AG04450 (cell line): ENCODE measurements at regions of chrX and their contacts with region 1.

Region 1: DNA sequence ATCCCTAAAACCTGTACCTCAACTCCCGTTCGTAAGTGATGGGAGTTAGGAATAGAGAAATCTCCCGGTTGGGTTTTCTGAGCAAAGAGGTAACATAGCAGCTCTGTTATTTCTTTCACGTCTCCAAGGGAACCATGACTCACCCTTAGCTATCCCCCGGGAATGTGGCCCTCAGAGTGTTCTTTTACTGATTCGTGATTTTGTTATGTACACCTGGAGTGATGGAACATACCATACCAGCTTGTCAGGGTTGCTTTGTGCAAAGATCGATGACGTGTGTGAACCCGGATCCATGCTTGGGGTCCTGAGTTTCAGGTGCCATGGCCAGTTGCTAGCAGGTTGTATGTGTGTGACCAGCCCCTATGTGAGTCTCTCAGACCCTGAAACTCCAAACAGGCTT is 52.6 kb downstream of the HPRT1 start:
- DNase-seq: peak; percentile 61
- H3K4me3 ChIP-seq: no peak overlapping the region
- H3K27ac ChIP-seq: peak overlapping the region; percentile 98
- H3K27me3 ChIP-seq: no peaks in the 10 kb centered on the region
- CTCF ChIP-seq: no peak

Region 2: DNA sequence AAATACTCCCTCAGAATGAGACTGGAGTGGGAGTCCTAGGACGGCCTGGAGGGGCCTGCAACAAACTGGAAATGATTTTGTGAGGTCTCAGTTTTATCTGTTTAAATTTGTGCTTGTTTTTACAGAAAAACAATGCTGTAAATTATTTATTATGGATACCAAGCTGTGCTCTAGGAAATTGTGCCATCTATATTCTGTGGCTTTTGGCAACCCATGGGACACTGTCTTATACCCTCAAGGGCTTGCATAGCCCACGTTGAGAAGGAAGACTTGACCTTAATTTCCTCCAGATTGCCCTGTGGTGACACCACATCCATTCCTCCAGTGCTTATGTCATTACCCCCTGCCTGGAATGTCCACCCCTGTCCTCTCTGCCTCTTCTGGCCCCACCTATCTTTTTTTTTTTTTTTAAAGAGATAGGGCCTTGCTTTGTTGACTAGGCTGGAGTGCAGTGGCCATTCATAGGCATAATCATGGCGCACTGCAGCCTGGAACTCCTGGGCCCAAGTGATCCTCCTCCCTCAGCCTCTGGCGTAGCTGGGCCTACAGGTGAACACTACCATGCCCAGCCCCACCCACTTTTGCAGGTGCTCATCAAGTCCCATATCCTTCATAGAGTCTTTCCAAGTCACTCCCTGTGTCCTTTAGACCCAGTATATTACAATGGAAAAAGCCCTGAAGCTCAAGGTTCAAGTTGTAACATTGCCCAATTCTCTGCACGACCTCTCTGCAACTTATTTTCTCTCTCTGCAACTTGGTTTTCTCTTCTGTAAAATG is 24.8 kb after region 1 on chrX:
- CTCF ChIA-PET with region 1: no interaction called
- POLR2A ChIA-PET with region 1: interaction called, 10 read pairs
- DNase-seq: no peak
- H3K4me3 ChIP-seq: no peak overlapping the region
- H3K27ac ChIP-seq: peak overlapping the region; percentile 57
- H3K27me3 ChIP-seq: no peaks in the 10 kb centered on the region
- CTCF ChIP-seq: no peak